Activated B cell treated with CpG ODN at 0.5 μM for 24 hours (primary cell): ENCODE measurements at regions of chr1 and their contacts with region 1.

Region 1: GRCh38 chr1:113835642-113836307 is 23.5 kb upstream of the RSBN1 start:
- DNase-seq: no peak
- ATAC-seq: no peak
- H3K4me3 Mint-ChIP-seq: no peak overlapping the region
- H3K27ac Mint-ChIP-seq: no peak overlapping the region
- H3K4me1 Mint-ChIP-seq: peaks cover 2% of the 10 kb centered on the region
- H3K27me3 Mint-ChIP-seq: no peaks in the 10 kb centered on the region
- CTCF ChIP-seq: peak; percentile 20

Region 2: GRCh38 chr1:113859478-113860175 is 23.9 kb after region 1 on chr1:
- CTCF ChIA-PET with region 1: interaction called, 20 read pairs
- POLR2A ChIA-PET with region 1: interaction called, 8 read pairs
- intact Hi-C with region 1: loop called (anchors 2 kb)
- DNase-seq: no peak
- ATAC-seq: peak; percentile 84
- H3K4me3 Mint-ChIP-seq: peak overlapping the region; percentile 51
- H3K27ac Mint-ChIP-seq: peak overlapping the region; percentile 95
- H3K4me1 Mint-ChIP-seq: peaks cover 66% of the 10 kb centered on the region
- H3K27me3 Mint-ChIP-seq: no peaks in the 10 kb centered on the region
- CTCF ChIP-seq: no peak

Region 3: GRCh38 chr1:113871597-113872113 is 35.9 kb after region 1 on chr1 and contains the start of gene PTPN22:
- CTCF ChIA-PET with region 1: interaction called, 5 read pairs
- POLR2A ChIA-PET with region 1: no interaction called
- intact Hi-C with region 1: loop called (anchors 1 kb)
- DNase-seq: peak; percentile 39
- ATAC-seq: peak; percentile 96
- H3K4me3 Mint-ChIP-seq: peak within 1 kb of the TSS; percentile 85
- H3K27ac Mint-ChIP-seq: peak within 1 kb of the TSS; percentile 95
- H3K4me1 Mint-ChIP-seq: peaks cover 77% of the 10 kb centered on the region
- H3K27me3 Mint-ChIP-seq: no peaks in the 10 kb centered on the region
- CTCF ChIP-seq: no peak
- total RNA-seq, gene PTPN22: 25.5 and 26.1 TPM in 2 replicates

Region 4: DNA sequence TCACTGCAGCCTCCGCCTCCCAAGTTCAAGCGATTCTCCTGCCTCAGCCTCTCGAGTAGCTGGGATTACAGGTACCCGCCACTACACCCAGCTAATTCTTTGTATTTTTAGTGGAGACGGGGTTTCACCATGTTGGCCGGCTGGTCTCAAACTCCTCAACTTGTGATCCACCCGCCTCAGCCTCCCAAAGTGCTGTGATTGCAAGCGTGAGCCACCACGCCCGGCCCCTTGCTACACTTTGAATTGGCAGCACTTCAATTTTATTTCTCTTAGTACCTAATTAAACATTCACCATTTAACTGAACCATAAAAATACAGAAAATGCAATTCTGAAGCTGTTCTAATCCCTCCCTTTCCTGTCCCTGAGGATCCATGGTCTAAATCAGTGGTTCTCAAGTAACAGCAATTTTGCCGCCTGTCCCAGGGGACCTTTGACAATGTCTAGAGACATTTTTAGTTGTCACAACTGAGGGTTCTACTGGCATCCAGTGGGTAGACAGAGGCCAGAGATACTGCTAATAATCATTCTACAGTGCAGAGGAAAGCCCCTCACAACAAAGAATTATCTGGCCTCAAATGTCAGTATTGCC is 56.0 kb after region 1 on chr1:
- CTCF ChIA-PET with region 1: no interaction called
- POLR2A ChIA-PET with region 1: no interaction called
- intact Hi-C with region 1: no loop called
- DNase-seq: no peak
- ATAC-seq: no peak
- H3K4me3 Mint-ChIP-seq: no peak overlapping the region
- H3K27ac Mint-ChIP-seq: no peak overlapping the region
- H3K4me1 Mint-ChIP-seq: no peaks in the 10 kb centered on the region
- H3K27me3 Mint-ChIP-seq: no peaks in the 10 kb centered on the region
- CTCF ChIP-seq: no peak

Region 5: GRCh38 chr1:113904674-113905434 is 69.1 kb after region 1 on chr1 and contains the starts of genes AP4B1 and DCLRE1B:
- CTCF ChIA-PET with region 1: interaction called, 42 read pairs
- POLR2A ChIA-PET with region 1: interaction called, 11 read pairs
- intact Hi-C with region 1: loop called (anchors 1 kb)
- DNase-seq: peak; percentile 89
- ATAC-seq: peak; percentile 91
- H3K4me3 Mint-ChIP-seq: peak within 1 kb of the TSS; percentile 94
- H3K27ac Mint-ChIP-seq: peak within 1 kb of the TSS; percentile 95
- H3K4me1 Mint-ChIP-seq: peaks cover 51% of the 10 kb centered on the region
- H3K27me3 Mint-ChIP-seq: no peaks in the 10 kb centered on the region
- CTCF ChIP-seq: no peak
- total RNA-seq, gene AP4B1: 48.5 and 69.9 TPM in 2 replicates
- total RNA-seq, gene DCLRE1B: 5.4 and 6.0 TPM in 2 replicates

Region 6: DNA sequence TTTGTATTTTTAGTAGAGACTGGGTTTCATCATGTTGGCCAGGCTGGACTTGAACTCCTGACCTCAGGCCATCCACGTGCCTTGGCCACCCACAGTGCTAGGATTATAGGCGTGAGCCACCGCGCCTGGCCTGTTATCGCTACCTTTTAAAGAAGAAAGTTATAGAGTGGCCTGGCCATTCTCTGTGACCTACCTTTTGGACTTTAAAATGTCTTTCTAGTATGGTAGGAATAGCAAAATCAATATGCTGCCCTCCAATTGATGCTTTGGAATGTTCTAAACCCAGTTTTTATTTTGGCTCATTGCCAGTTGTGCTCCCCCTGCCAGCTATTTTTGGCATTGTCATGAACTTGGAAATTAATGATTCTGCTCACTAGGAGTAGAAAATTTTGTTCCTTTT is 113.2 kb after region 1 on chr1:
- CTCF ChIA-PET with region 1: interaction called, 14 read pairs
- POLR2A ChIA-PET with region 1: no interaction called
- intact Hi-C with region 1: loop called (anchors 5 kb)
- DNase-seq: no peak
- ATAC-seq: no peak
- H3K4me3 Mint-ChIP-seq: no peak overlapping the region
- H3K27ac Mint-ChIP-seq: no peak overlapping the region
- H3K4me1 Mint-ChIP-seq: peaks cover 30% of the 10 kb centered on the region
- H3K27me3 Mint-ChIP-seq: no peaks in the 10 kb centered on the region
- CTCF ChIP-seq: no peak

Region 7: DNA sequence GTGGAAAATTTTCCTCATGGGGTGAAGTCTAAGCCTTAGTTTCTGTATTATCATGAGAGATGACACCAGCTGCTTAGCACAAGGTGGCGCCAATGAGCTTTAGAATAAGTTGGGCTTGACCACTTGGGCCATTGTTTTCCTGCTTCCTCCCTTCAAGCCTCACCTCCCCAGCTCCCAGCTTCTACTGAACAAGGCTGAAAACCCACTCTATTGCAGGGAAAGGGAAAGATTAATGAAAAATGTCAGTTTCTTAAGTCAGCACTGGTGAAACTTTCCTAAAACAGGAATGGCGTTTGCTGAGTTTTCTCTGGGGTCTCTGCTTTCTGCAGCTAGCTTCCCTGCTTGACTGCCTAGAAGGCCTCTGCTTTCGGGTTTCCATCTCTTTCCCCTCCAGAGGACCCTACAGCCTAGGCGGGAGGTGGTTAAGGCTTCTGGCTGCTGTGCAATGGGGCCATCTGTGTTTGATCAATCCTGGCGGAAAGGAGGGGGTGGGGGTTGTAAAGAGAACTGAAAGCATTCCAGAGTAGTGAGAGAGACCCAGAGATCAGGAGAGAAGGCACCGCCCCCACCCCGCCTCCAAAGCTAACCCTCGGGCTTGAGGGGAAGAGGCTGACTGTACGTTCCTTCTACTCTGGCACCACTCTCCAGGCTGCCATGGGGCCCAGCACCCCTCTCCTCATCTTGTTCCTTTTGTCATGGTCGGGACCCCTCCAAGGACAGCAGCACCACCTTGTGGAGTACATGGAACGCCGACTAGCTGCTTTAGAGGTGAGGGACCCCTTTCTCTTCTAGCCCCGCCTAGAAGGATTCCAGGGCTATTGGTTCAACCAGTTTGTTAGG is 143.3 kb after region 1 on chr1 and contains the start of gene OLFML3:
- CTCF ChIA-PET with region 1: no interaction called
- POLR2A ChIA-PET with region 1: no interaction called
- intact Hi-C with region 1: loop called (anchors 1 kb)
- DNase-seq: no peak
- ATAC-seq: no peak
- H3K4me3 Mint-ChIP-seq: no peak within 1 kb of the TSS
- H3K27ac Mint-ChIP-seq: no peak within 1 kb of the TSS
- H3K4me1 Mint-ChIP-seq: peaks cover 14% of the 10 kb centered on the region
- H3K27me3 Mint-ChIP-seq: no peaks in the 10 kb centered on the region
- CTCF ChIP-seq: no peak
- total RNA-seq, gene OLFML3: 0.27 and 0.29 TPM in 2 replicates

Region 8: DNA sequence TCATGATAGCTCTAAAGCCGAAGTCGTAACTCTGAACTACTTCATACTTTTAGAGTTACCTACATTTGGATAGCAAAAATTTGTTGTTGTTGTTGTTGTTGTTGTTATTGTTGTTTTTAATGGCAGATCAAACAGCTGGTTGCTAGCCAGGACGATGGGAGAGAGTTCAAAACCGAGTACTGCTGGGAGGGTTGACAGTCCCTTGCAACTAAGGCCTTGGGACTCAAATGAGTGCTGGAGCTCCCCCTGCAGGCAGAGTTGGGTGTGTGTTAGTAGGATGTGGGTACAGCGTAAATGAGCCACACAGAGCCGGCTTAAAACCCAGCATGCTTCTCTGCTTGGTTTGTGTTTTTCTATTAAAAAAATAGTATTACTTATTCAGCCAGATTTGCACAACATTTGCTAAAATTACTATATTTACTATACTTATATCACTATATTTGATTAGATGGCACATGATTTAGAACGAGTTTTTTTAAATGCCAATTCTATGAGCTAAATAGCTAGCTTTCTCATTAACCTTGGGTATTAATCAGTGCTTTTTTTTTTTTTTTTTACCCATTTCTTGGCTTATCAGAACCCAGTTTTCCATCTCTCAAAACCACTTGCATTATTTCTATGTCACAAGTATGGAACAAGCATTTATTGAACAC is 447.1 kb after region 1 on chr1:
- CTCF ChIA-PET with region 1: no interaction called
- POLR2A ChIA-PET with region 1: no interaction called
- intact Hi-C with region 1: loop called (anchors 2 kb)
- DNase-seq: peak; percentile 56
- ATAC-seq: peak; percentile 74
- H3K4me3 Mint-ChIP-seq: no peak overlapping the region
- H3K27ac Mint-ChIP-seq: no peak overlapping the region
- H3K4me1 Mint-ChIP-seq: no peaks in the 10 kb centered on the region
- H3K27me3 Mint-ChIP-seq: peaks cover 2% of the 10 kb centered on the region
- CTCF ChIP-seq: no peak